ENCODE measurements at regions of chr19 and their contacts with region 1.

Region 1: DNA sequence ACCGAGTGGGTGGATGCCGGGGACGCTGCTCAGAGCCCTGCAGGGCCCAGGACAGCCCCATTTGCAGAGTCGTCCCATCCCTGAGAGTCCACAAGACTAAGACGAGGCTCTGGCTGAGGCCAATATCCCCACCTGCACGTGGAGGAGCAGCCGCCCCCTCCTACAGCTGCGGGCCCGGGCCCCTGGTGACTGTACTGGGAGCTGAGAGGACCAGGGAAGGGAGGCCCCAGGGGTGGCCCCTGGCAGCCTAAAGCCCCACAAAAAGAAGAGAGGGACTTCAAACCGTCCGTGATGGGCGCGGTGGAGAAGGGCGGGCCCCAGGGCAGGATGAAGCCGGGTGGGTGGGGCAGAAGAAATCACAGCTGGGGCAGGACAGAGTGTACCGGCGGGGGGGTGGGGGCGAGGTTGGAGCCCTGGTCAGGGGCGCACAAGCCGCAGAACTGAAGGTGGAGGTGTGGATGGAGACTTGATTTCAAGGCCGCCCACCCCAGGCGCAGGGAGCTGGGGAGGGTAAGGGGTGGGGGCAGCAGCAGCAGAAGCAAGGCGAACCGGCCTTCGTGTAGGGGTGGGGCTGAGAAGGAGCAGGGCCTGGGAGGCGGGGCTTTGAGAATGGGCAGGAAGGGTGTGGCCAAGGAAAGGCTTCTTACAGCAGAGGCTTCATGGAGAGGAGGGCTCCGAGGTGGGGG is 12.9 kb downstream of the CFD start:
- DNase-seq: peak; percentile 93
- H3K4me3 ChIP-seq: no peak overlapping the region
- H3K27ac ChIP-seq: peak overlapping the region; percentile 77
- H3K4me1 ChIP-seq: peaks cover 55% of the 10 kb centered on the region
- H3K27me3 ChIP-seq: no peaks in the 10 kb centered on the region
- CTCF ChIP-seq: no peak

Region 2: DNA sequence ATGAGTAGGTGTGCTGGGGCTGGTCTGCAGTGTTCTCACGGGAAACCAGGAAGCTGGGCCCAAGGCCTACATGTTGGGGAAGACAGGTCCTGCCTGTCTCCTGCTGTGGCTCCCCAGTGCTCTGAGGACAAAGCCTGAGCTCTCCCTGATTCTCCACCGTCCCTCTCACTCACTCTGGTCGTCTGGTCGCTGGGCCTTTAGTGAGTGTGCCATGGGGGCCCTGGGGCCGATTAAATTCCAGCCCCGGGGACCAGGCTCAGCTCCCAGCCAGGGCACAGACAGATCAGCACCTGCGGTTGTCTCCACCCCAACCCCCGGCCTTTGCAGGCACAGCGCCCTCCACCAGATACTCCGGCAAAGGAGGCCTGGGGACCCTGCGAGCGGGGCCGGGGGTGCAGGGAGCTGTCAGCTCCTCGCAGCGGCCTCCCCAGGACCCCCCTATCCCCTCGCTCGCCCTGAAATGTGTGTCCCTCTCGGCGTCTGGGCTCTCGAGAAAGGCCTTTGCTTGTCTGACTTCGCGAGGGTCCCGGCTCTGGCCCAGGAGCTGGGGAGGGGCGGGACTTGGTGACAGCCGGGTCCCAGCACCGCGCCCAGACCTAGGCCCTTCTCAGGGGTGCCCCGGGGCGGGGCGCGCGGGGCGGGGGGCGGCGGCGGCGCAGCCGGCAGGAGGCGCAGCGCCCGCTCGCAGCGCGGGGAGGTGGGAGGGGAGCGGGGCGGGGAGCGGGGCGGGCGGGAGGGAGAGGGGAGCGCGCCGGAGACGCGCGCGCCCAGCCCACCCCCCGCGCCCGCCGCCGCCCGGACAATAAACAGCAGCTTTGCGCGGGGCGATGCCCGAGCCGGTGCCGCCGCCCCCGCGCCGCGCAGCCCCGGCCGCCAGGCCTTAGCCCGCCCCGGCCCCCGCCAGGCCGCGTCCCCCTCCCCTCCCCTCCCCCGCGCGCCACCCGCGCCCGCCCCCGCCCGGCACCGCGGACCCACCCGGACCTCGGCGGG is 164.0 kb before region 1 on chr19 and contains the start of gene PALM:
- CTCF ChIA-PET with region 1: no interaction called
- POLR2A ChIA-PET with region 1: interaction called, 12 read pairs
- intact Hi-C with region 1: no loop called
- DNase-seq: peak; percentile 60
- H3K4me3 ChIP-seq: peak within 1 kb of the TSS; percentile 76
- H3K27ac ChIP-seq: peak within 1 kb of the TSS; percentile 57
- H3K4me1 ChIP-seq: peaks cover 13% of the 10 kb centered on the region
- H3K27me3 ChIP-seq: no peaks in the 10 kb centered on the region
- CTCF ChIP-seq: peak; percentile 26; the same call in 1 of the 2 replicates
- total RNA-seq, gene PALM: 21.2 and 40.3 TPM in 2 replicates

Region 3: DNA sequence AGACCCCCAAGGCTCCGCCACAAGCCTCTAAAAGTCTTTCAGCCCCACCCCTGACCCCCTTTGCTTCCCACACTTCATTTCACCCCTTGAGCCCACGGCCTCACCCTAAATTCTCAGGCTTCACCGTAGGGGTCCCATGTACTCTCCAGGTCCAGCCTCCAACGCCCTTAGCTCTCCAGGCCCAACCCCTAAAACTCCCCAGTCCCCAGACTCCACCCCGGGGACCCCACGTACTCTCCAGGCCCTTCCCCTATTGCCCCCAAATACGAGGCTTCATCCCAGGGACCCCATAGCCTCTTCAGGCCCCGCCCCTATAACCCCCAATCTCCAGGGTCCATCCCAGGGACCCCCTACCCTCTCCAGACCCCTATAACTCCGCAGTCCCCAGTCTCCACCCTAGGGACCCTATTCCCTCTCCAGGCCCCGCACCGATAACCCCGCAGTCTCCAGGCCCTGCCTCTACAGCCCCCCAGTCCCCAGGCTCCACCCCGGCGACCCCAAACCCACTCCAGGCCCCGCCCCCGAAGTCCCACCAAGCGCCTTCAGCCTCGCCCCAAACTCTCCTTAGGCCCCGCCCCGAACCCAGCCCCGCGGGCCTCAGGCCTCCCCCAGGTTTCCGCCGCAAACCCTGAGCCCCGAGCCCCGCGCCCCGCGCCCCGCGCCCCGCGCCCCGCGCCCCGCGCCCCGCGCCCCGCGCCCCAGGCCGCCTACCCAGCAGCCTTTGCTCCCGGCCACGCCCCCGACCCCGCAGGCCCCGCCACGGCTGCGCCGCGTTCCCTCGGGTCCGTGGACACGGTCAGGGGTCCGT is 20.0 kb after region 1 on chr19:
- CTCF ChIA-PET with region 1: no interaction called
- POLR2A ChIA-PET with region 1: no interaction called
- intact Hi-C with region 1: no loop called
- DNase-seq: peak; percentile 52
- H3K4me3 ChIP-seq: peak overlapping the region; percentile 82
- H3K27ac ChIP-seq: peak overlapping the region; percentile 98
- H3K4me1 ChIP-seq: no peaks in the 10 kb centered on the region
- H3K27me3 ChIP-seq: no peaks in the 10 kb centered on the region
- CTCF ChIP-seq: no peak

Measured in A673 (cell line).